ENCODE measurements at regions of chr12 and their contacts with region 1.

Region 1: DNA sequence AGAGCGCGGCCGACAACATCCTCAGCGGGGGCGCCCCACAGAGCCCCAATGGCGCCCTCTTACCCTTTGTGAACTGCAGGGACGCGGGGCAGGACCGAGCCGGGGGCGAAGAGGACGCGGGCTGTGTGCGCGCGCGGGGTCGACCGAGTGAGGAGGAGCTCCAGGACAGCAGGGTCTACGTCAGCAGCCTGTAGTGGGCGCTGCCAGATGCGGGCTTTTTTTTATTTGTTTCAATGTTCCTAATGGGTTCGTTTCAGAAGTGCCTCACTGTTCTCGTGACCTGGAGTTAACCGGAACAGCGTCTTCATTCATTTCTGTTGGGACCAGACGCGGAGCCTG is 103.8 kb upstream of the FKBP4 start:
- DNase-seq: peak; percentile 75
- H3K4me3 Mint-ChIP-seq: peak overlapping the region; percentile 80
- H3K27ac Mint-ChIP-seq: peak overlapping the region; percentile 81
- H3K4me1 Mint-ChIP-seq: peaks cover 25% of the 10 kb centered on the region
- H3K27me3 Mint-ChIP-seq: peaks cover 2% of the 10 kb centered on the region

Region 2: DNA sequence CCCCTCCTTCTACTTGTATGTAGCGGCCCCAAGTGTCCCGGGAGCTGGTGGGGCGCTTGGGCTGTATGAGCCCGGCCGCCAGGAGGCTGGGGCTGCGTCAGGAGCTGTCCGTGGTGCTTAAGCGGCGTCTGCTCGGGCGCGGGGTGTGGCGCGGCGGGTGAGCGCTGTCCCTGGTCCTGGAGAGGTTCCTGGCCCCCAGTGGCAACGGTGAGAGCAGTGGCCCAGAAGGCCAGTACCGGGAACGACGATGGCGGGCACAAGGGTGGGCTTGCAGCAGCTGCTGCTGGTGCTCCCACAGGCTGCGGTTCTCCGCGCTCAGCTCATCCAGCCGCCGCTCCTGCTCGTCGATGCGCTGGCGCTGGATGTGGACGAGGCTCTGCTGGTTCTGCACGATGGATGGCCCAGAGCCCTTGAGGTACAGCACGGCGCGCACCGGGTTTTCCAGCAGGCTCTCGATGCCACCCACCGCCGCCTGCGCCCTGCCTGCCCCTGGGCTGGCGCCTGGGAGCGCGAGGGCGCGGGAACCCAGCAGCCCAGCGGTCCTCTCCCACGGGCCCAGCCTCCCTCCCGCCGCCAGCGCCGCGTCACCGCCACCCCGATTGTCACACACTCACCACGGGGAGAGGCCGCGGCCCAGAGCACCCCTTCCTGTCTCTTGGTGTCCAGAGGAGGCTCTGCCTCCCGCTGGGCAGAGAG is 61.8 kb after region 1 on chr12:
- CTCF ChIA-PET with region 1: interaction called, 3 read pairs
- intact Hi-C with region 1: loop called (anchors 2 kb)
- DNase-seq: peak; percentile 83
- H3K4me3 Mint-ChIP-seq: no peak overlapping the region
- H3K27ac Mint-ChIP-seq: no peak overlapping the region
- H3K4me1 Mint-ChIP-seq: no peaks in the 10 kb centered on the region
- H3K27me3 Mint-ChIP-seq: peaks cover 21% of the 10 kb centered on the region

Region 3: GRCh38 chr12:2794736-2795289 is 103.8 kb after region 1 on chr12 and contains the start of gene FKBP4:
- CTCF ChIA-PET with region 1: interaction called, 3 read pairs
- intact Hi-C with region 1: loop called (anchors 1 kb)
- DNase-seq: peak; percentile 91
- H3K4me3 Mint-ChIP-seq: peak within 1 kb of the TSS; percentile 88
- H3K27ac Mint-ChIP-seq: peak within 1 kb of the TSS; percentile 68
- H3K4me1 Mint-ChIP-seq: peaks cover 26% of the 10 kb centered on the region
- H3K27me3 Mint-ChIP-seq: no peaks in the 10 kb centered on the region
- total RNA-seq, gene FKBP4: 139 TPM

Region 4: GRCh38 chr12:2877047-2877952 is 186.3 kb after region 1 on chr12 and contains the starts of genes FOXM1 and RHNO1:
- CTCF ChIA-PET with region 1: interaction called, 3 read pairs
- intact Hi-C with region 1: loop called (anchors 5 kb)
- DNase-seq: peak; percentile 89
- H3K4me3 Mint-ChIP-seq: peak within 1 kb of the TSS; percentile 95
- H3K27ac Mint-ChIP-seq: peak within 1 kb of the TSS; percentile 94
- H3K4me1 Mint-ChIP-seq: peaks cover 30% of the 10 kb centered on the region
- H3K27me3 Mint-ChIP-seq: no peaks in the 10 kb centered on the region
- total RNA-seq, gene FOXM1: 74.6 to 80.5 TPM
- total RNA-seq, gene RHNO1: 64.6 to 68.1 TPM

Region 5: DNA sequence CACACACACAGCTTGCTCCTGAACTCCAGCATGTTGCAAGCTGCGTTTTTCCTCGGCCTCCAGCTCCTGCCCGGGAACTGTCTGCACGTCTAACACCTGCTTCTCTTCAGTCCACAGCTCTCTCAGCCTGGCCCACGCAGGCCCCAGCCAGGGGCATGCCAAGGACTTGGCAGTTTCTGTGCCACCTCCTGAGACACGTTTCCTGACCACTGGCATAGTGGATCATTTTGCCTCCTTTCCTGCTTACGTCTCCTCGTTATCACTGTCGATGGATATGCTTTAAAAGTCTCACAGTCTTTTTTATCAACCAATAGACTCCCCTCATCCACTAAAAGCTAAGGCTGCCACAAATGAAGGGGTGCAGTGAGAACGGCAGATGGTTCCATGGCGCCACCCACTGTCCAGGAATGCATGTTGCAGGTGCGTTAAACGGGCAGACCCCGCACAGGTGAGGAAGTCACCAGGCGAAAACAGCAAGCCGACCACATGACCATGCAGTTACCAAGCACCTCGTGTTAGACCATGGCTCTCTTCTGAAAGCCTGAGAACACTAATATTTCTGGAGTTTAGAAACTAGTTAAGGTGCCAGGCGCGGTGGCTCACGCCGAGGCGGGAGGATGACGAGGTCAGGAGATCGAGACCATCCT is 253.5 kb after region 1 on chr12:
- CTCF ChIA-PET with region 1: no interaction called
- intact Hi-C with region 1: loop called (anchors 1 kb)
- DNase-seq: peak; percentile 77
- H3K4me3 Mint-ChIP-seq: peak overlapping the region; percentile 36
- H3K27ac Mint-ChIP-seq: no peak overlapping the region
- H3K4me1 Mint-ChIP-seq: peaks cover 2% of the 10 kb centered on the region
- H3K27me3 Mint-ChIP-seq: peaks cover 3% of the 10 kb centered on the region